B cell (primary cell): ENCODE measurements at regions of chr11 and their contacts with region 1.

Region 1: DNA sequence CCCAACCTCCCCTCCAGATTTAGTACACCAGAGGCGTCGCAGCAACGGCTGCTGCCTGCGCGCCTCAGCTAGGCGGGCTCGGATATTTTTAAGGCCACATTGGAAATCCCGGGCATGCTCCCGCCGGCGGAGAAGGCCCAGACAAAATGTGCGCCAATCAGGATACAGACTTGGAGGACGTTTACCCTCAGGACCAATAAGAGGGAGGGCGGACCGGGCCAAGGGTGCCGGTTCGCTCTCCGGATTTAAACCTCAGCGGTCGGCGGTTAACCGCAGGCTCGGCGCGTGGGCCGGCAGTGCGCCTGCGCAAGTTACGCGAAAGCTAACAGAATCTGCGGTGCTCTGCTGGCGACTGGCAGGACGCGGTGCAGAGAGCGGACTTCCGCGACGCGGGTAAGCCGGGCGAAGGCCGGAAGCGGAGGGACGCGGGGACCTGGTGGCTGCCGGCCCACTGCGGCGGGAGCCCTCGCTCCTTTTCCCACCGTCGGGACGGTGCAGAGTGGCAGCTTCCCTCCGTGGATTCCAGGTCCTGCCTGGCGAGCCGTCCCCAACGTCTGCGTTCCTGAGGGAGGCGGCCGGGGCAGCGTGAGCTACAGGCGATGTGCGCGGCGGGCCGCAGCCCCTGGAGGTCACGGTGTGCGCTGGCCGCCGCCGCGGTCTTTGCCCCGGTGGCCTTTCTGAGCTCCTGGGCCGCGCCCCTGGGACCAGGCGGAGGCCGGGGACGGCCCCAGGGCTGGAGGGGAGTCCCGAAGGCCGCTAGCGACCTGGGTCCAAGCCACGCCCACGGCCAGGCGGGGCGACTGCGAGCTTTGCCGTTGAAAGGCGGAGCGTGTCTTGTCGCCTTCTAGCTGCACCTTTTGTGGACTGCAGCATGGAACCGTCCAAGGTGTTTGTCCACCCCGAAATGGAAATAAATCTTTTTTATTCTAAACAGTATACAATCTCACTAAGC is at the start of gene HYLS1:
- DNase-seq: peak; percentile 98
- ATAC-seq: peak; percentile 81
- H3K4me3 ChIP-seq: peak within 1 kb of the TSS; percentile 71 to 97 (median 90)
- H3K4me3 Mint-ChIP-seq: peak within 1 kb of the TSS; percentile 96
- H3K27ac ChIP-seq: peak within 1 kb of the TSS; percentile 90 to 94
- H3K27ac Mint-ChIP-seq: peak within 1 kb of the TSS; percentile 99
- H3K4me1 ChIP-seq: peaks cover 5 to 19% of the 10 kb centered on the region in 2 donors
- H3K4me1 Mint-ChIP-seq: peaks cover 24% of the 10 kb centered on the region
- H3K27me3 ChIP-seq: no peaks in the 10 kb centered on the region
- H3K27me3 Mint-ChIP-seq: no peaks in the 10 kb centered on the region
- CTCF ChIP-seq: no peak
- total RNA-seq, gene HYLS1: 9.4 and 9.9 TPM in 2 replicates

Region 2: GRCh38 chr11:124800226-124800929 is 1087.3 kb before region 1 on chr11 and contains the start of gene MSANTD2:
- CTCF ChIA-PET with region 1: no interaction called
- POLR2A ChIA-PET with region 1: no interaction called
- intact Hi-C with region 1: loop called (anchors 2 kb)
- DNase-seq: peak; percentile 89
- ATAC-seq: peak; percentile 84
- H3K4me3 ChIP-seq: peak within 1 kb of the TSS; percentile 57 to 95 (median 91)
- H3K4me3 Mint-ChIP-seq: peak within 1 kb of the TSS; percentile 94
- H3K27ac ChIP-seq: peak within 1 kb of the TSS; percentile 96 to 99
- H3K27ac Mint-ChIP-seq: peak within 1 kb of the TSS; percentile 93
- H3K4me1 ChIP-seq: peaks cover 15 to 17% of the 10 kb centered on the region in 2 donors
- H3K4me1 Mint-ChIP-seq: peaks cover 22% of the 10 kb centered on the region
- H3K27me3 ChIP-seq: no peaks in the 10 kb centered on the region
- H3K27me3 Mint-ChIP-seq: no peaks in the 10 kb centered on the region
- CTCF ChIP-seq: peak; percentile 2
- total RNA-seq, gene MSANTD2: 26.8 and 33.4 TPM in 2 replicates

Region 3: GRCh38 chr11:125514336-125515101 is 373.1 kb before region 1 on chr11:
- CTCF ChIA-PET with region 1: no interaction called
- POLR2A ChIA-PET with region 1: no interaction called
- intact Hi-C with region 1: loop called (anchors 1 kb)
- DNase-seq: peak; percentile 87
- ATAC-seq: peak; percentile 76
- H3K4me3 ChIP-seq: peak overlapping the region in 1 of 5 experiments; percentile 32
- H3K4me3 Mint-ChIP-seq: peak overlapping the region; percentile 69
- H3K27ac ChIP-seq: peak overlapping the region; percentile 42 to 78
- H3K27ac Mint-ChIP-seq: peak overlapping the region; percentile 88
- H3K4me1 ChIP-seq: peaks cover 24 to 26% of the 10 kb centered on the region in 2 donors
- H3K4me1 Mint-ChIP-seq: peaks cover 34% of the 10 kb centered on the region
- H3K27me3 ChIP-seq: peaks cover 0 to 3% (median 0%) of the 10 kb centered on the region in 4 experiments
- H3K27me3 Mint-ChIP-seq: no peaks in the 10 kb centered on the region
- CTCF ChIP-seq: no peak

Region 4: DNA sequence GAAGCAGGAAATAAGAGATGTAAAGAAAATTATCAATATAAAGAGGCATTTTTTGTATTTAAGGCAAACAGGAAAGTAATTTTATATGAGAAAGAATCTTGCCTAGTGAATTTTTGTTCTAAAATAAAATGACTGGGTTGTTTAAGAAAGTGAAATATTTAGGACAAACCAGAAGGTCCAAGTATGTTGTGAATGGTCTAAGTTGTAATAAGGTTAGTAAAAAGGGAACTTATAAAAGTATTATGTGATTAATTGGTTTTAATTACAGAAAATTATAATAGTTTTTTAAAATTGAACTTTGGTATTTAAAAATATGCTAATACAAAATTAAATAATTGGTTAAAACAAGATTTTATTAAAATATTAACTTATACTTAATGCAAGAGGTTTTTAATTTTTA is 344.9 kb before region 1 on chr11:
- CTCF ChIA-PET with region 1: no interaction called
- POLR2A ChIA-PET with region 1: no interaction called
- intact Hi-C with region 1: no loop called
- DNase-seq: no peak
- ATAC-seq: no peak
- H3K4me3 ChIP-seq: no peak overlapping the region
- H3K4me3 Mint-ChIP-seq: no peak overlapping the region
- H3K27ac ChIP-seq: no peak overlapping the region
- H3K27ac Mint-ChIP-seq: no peak overlapping the region
- H3K4me1 ChIP-seq: no peaks in the 10 kb centered on the region
- H3K4me1 Mint-ChIP-seq: no peaks in the 10 kb centered on the region
- H3K27me3 ChIP-seq: no peaks in the 10 kb centered on the region
- H3K27me3 Mint-ChIP-seq: no peaks in the 10 kb centered on the region
- CTCF ChIP-seq: no peak

Region 5: GRCh38 chr11:125592305-125593112 is 295.1 kb before region 1 on chr11 and contains the start of gene STT3A:
- CTCF ChIA-PET with region 1: no interaction called
- POLR2A ChIA-PET with region 1: no interaction called
- intact Hi-C with region 1: loop called (anchors 1 kb)
- DNase-seq: peak; percentile 99
- ATAC-seq: peak; percentile 92
- H3K4me3 ChIP-seq: peak within 1 kb of the TSS; percentile 72 to 97 (median 84)
- H3K4me3 Mint-ChIP-seq: peak within 1 kb of the TSS; percentile 94
- H3K27ac ChIP-seq: peak within 1 kb of the TSS; percentile 94 to 95
- H3K27ac Mint-ChIP-seq: peak within 1 kb of the TSS; percentile 97
- H3K4me1 ChIP-seq: peaks cover 27 to 28% of the 10 kb centered on the region in 2 donors
- H3K4me1 Mint-ChIP-seq: peaks cover 41% of the 10 kb centered on the region
- H3K27me3 ChIP-seq: no peaks in the 10 kb centered on the region
- H3K27me3 Mint-ChIP-seq: no peaks in the 10 kb centered on the region
- CTCF ChIP-seq: no peak
- total RNA-seq, gene STT3A: 76.1 and 78.4 TPM in 2 replicates

Region 6: GRCh38 chr11:125874556-125875124 is 13.0 kb before region 1 on chr11:
- CTCF ChIA-PET with region 1: interaction called, 9 read pairs
- POLR2A ChIA-PET with region 1: interaction called, 7 read pairs
- intact Hi-C with region 1: loop called (anchors 1 kb)
- DNase-seq: peak; percentile 63
- ATAC-seq: peak; percentile 49
- H3K4me3 ChIP-seq: no peak overlapping the region
- H3K4me3 Mint-ChIP-seq: no peak overlapping the region
- H3K27ac ChIP-seq: no peak overlapping the region
- H3K27ac Mint-ChIP-seq: no peak overlapping the region
- H3K4me1 ChIP-seq: peaks cover 0 to 3% of the 10 kb centered on the region in 2 donors
- H3K4me1 Mint-ChIP-seq: peaks cover 10% of the 10 kb centered on the region
- H3K27me3 ChIP-seq: no peaks in the 10 kb centered on the region
- H3K27me3 Mint-ChIP-seq: no peaks in the 10 kb centered on the region
- CTCF ChIP-seq: peak; percentile 74

Region 7: GRCh38 chr11:126062679-126063506 is 175.2 kb after region 1 on chr11 and contains the start of gene CDON:
- CTCF ChIA-PET with region 1: no interaction called
- POLR2A ChIA-PET with region 1: no interaction called
- intact Hi-C with region 1: loop called (anchors 5 kb)
- DNase-seq: peak; percentile 91
- ATAC-seq: peak; percentile 85
- H3K4me3 ChIP-seq: peak within 1 kb of the TSS; percentile 47 to 69 (median 62)
- H3K4me3 Mint-ChIP-seq: peak within 1 kb of the TSS; percentile 84
- H3K27ac ChIP-seq: no peak within 1 kb of the TSS
- H3K27ac Mint-ChIP-seq: peak within 1 kb of the TSS; percentile 62
- H3K4me1 ChIP-seq: peaks cover 8 to 10% of the 10 kb centered on the region in 2 donors
- H3K4me1 Mint-ChIP-seq: peaks cover 10% of the 10 kb centered on the region
- H3K27me3 ChIP-seq: peaks cover 0 to 29% (median 18%) of the 10 kb centered on the region in 4 experiments
- H3K27me3 Mint-ChIP-seq: peaks cover 52% of the 10 kb centered on the region
- CTCF ChIP-seq: no peak
- total RNA-seq, gene CDON: not detected in 2 replicates

Region 8: GRCh38 chr11:126268708-126269579 is 381.3 kb after region 1 on chr11 and contains the starts of genes FOXRED1 and SRPRA:
- CTCF ChIA-PET with region 1: no interaction called
- POLR2A ChIA-PET with region 1: no interaction called
- intact Hi-C with region 1: loop called (anchors 5 kb)
- DNase-seq: peak; percentile 99
- ATAC-seq: peak; percentile 99
- H3K4me3 ChIP-seq: peak within 1 kb of the TSS; percentile 83 to 98 (median 89)
- H3K4me3 Mint-ChIP-seq: peak within 1 kb of the TSS; percentile 96
- H3K27ac ChIP-seq: peak within 1 kb of the TSS; percentile 94 to 95
- H3K27ac Mint-ChIP-seq: peak within 1 kb of the TSS; percentile 93
- H3K4me1 ChIP-seq: peaks cover 14 to 20% of the 10 kb centered on the region in 2 donors
- H3K4me1 Mint-ChIP-seq: peaks cover 36% of the 10 kb centered on the region
- H3K27me3 ChIP-seq: no peaks in the 10 kb centered on the region
- H3K27me3 Mint-ChIP-seq: no peaks in the 10 kb centered on the region
- CTCF ChIP-seq: no peak
- total RNA-seq, gene FOXRED1: 44.4 and 46.0 TPM in 2 replicates
- total RNA-seq, gene SRPRA: 129 and 136 TPM in 2 replicates